ENCODE measurements at regions of chr7 and their contacts with region 1.

Region 1: GRCh38 chr7:94087664-94088352 is 83.7 kb upstream of the BET1 start:
- DNase-seq: peak; percentile 48
- ATAC-seq: peak; percentile 94
- H3K4me3 ChIP-seq: no peak overlapping the region
- H3K27ac ChIP-seq: no peak overlapping the region
- H3K4me1 ChIP-seq: no peaks in the 10 kb centered on the region
- H3K27me3 ChIP-seq: peaks cover 0 to 7% of the 10 kb centered on the region in 2 experiments; a peak in 2 of 5 replicates
- CTCF ChIP-seq: peak; percentile 84
- EP300 ChIP-seq: no peak
- POLR2A ChIP-seq: no peak
- RAD21 ChIP-seq: peak; percentile 58; the same call in 1 of the 2 replicates

Region 2: DNA sequence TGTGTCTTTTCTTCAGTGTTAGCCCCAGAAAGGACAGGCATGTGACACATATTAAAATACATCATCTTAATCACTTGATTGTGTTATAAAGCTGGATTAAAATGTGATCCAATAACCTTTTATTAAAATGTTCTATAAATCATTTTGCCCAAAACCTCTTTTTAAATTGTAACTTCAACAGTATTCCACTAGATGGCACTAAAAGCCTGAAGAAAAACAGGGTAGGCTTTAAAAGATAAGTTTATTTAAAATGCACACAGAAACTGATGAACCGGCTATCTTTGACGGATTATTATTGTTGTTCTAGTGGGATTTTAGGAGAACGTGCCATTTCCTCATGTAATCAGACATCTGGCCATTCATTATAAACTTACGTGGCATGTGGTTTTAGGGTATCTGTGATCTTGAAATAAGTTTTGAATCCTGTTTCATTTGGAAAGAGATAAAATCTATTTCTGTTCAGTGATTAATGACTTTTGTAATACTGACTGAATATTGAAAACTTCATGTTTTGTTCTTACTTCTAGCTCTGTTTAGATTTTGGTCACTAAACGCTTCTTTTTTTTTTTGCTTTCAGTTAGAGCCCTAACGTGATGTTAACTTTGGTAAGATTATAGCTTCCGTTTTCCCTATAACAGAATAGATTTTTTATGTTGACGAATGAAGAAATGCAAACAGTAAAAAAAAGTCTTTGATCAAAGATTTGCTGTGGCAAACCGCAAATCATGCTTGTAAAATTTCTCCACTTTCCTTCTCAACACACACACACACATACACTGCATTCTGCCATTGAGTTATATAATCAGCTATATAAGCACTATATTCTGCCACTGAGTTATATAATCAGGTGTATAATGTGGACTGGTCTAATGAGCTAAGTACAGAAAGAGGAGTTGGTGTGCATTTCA is 842.0 kb before region 1 on chr7:
- CTCF ChIA-PET with region 1: no interaction called
- POLR2A ChIA-PET with region 1: no interaction called
- in situ Hi-C with region 1: no loop called
- intact Hi-C with region 1: loop called (anchors 10 kb)
- DNase-seq: peak; percentile 21
- ATAC-seq: no peak
- H3K4me3 ChIP-seq: no peak overlapping the region
- H3K27ac ChIP-seq: no peak overlapping the region
- H3K4me1 ChIP-seq: no peaks in the 10 kb centered on the region
- H3K27me3 ChIP-seq: no peaks in the 10 kb centered on the region
- CTCF ChIP-seq: peak; percentile 53
- EP300 ChIP-seq: no peak
- POLR2A ChIP-seq: no peak
- RAD21 ChIP-seq: no peak

Region 3: DNA sequence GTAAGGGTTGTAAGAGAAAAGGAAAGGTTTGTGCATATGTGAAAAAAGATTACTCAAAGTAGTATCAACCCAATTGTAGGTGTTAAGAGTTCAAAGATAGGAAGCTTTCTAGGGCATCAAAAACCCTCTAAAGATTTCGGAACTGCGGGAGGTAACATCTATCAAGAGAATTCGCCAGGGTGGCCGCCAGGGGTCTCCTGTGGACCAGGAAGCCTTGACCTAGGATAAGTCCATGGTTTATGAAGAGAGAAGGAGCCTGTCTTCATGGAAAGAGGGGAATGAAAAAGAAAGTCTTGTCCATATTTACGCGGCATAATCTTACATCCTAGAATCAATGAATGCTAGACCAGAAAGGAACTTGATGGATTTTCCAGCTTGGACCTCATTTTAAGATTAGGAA is 372.6 kb before region 1 on chr7:
- CTCF ChIA-PET with region 1: interaction called, 11 read pairs
- POLR2A ChIA-PET with region 1: no interaction called
- in situ Hi-C with region 1: no loop called
- intact Hi-C with region 1: no loop called
- DNase-seq: peak; percentile 34
- ATAC-seq: peak; percentile 90
- H3K4me3 ChIP-seq: no peak overlapping the region
- H3K27ac ChIP-seq: no peak overlapping the region
- H3K4me1 ChIP-seq: no peaks in the 10 kb centered on the region
- H3K27me3 ChIP-seq: no peaks in the 10 kb centered on the region
- CTCF ChIP-seq: peak; percentile 67
- EP300 ChIP-seq: no peak
- POLR2A ChIP-seq: no peak
- RAD21 ChIP-seq: no peak; the same call in 1 of the 2 replicates

Region 4: DNA sequence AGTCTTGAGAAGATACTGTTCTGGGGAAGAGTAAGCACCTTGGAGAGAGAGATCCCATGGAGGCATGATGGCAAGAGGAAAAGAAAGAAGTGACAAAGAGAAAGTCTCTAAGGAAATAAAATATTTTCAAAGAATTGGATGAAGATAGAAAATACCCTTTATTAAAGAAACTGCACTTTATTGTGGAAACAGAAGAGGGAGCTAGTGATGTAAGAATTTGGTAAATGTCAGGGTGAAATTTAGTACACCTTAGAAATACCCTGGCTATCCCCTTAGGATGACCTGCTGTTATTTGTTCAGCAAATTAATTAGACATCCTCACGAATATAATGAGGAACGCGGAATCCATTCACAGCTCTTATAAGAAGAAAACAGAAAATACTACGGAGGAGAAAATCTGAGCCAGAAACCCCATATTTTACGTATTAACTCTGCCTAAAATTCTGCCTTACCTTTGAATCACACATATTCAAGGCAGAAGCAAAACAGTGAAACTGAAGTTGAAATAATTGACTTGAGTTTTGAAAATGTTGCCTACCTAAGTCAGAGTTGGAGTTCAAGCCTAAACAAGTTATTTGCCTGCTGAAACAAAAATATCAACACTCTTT is 288.0 kb before region 1 on chr7:
- CTCF ChIA-PET with region 1: interaction called, 9 read pairs
- POLR2A ChIA-PET with region 1: no interaction called
- in situ Hi-C with region 1: no loop called
- intact Hi-C with region 1: loop called (anchors 1 kb)
- DNase-seq: no peak
- ATAC-seq: no peak
- H3K4me3 ChIP-seq: no peak overlapping the region
- H3K27ac ChIP-seq: no peak overlapping the region
- H3K4me1 ChIP-seq: no peaks in the 10 kb centered on the region
- H3K27me3 ChIP-seq: no peaks in the 10 kb centered on the region
- CTCF ChIP-seq: peak; percentile 23; the same call in 1 of the 2 replicates
- EP300 ChIP-seq: no peak
- POLR2A ChIP-seq: no peak
- RAD21 ChIP-seq: no peak

Region 5: DNA sequence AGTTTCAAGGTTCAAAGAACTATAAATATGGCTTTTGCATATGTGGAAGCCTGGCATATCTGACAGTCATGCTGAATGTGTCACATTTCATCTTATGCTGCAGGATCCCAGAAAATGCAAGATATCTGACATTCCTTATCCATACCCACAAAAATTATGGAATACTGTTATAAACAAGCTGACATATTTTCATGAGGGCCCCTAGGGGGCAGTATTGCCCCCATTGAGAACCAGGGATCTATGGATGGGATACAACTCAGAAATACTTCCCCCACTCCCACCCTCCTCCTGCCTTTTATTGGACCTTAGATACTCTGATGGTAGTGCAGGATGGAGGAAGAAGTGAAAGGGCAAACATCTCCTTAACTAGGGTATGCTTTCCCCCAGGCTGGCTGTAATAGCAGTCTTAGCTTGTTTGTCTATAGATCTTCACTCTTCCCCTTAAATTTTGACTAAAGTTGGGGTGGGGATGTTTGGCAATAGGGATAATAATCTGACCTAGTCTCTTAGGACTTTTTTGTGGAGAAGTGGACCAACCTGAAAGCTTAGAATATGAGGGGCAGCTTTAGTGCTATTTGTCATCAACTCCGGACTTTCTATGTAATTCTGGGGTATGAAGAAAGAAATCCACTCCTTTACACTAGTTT is 184.9 kb before region 1 on chr7:
- CTCF ChIA-PET with region 1: interaction called, 18 read pairs
- POLR2A ChIA-PET with region 1: no interaction called
- in situ Hi-C with region 1: loop called (anchors 5 kb)
- intact Hi-C with region 1: loop called (anchors 1 kb)
- DNase-seq: peak; percentile 25
- ATAC-seq: peak; percentile 62
- H3K4me3 ChIP-seq: no peak overlapping the region
- H3K27ac ChIP-seq: no peak overlapping the region
- H3K4me1 ChIP-seq: no peaks in the 10 kb centered on the region
- H3K27me3 ChIP-seq: no peaks in the 10 kb centered on the region
- CTCF ChIP-seq: peak; percentile 62
- EP300 ChIP-seq: no peak
- POLR2A ChIP-seq: no peak
- RAD21 ChIP-seq: peak; percentile 29; the same call in 1 of the 2 replicates

Region 6: DNA sequence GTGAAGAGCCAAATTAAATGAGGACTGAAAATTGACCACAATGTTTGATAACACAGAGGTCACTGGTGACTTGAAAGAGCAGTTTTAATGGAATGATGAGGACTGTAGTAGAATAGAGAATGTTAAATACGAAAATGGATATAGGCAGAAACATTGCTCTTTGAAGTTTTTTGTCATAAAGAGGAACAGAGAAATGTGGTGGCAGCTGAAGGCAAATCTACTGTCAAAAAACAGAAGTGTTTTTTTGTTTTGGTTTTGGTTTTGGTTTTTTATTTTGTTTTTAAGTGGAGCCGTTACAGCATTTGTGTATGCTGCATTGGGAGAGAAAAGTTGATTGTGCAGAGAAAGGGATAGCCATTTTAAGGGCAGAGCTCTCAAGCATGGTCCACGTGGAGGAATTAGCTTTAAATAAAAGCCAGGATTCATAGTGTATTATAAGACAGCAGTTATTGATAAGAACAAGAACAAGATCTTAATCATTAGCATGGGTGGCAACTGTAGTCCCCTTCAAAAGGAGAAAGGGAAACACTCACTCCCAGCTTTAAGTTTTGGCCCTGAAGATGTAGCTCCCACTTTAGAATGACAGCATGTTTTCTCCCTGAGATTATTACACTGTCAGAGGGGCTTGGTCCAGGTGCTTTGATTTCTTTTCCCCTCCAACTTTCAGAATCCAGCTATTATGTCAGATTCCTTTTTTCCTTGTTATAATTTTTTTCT is 73.1 kb after region 1 on chr7:
- CTCF ChIA-PET with region 1: no interaction called
- POLR2A ChIA-PET with region 1: no interaction called
- in situ Hi-C with region 1: no loop called
- intact Hi-C with region 1: no loop called
- DNase-seq: no peak
- ATAC-seq: no peak
- H3K4me3 ChIP-seq: no peak overlapping the region
- H3K27ac ChIP-seq: no peak overlapping the region
- H3K4me1 ChIP-seq: no peaks in the 10 kb centered on the region
- H3K27me3 ChIP-seq: no peaks in the 10 kb centered on the region
- CTCF ChIP-seq: no peak
- EP300 ChIP-seq: no peak
- POLR2A ChIP-seq: no peak
- RAD21 ChIP-seq: no peak